Activated CD4-positive, alpha-beta memory T cell treated with anti-CD3 and anti-CD28 coated beads for 36 hours (primary cell): ENCODE measurements at regions of chr22 and their contacts with region 1.

Region 1: GRCh38 chr22:31585161-31585859 is 76.7 kb downstream of the PISD start:
- DNase-seq: peak; percentile 49
- H3K4me3 Mint-ChIP-seq: no peak overlapping the region
- H3K27ac Mint-ChIP-seq: peak overlapping the region; percentile 6
- H3K4me1 Mint-ChIP-seq: peaks cover 55% of the 10 kb centered on the region
- H3K27me3 Mint-ChIP-seq: no peaks in the 10 kb centered on the region

Region 2: DNA sequence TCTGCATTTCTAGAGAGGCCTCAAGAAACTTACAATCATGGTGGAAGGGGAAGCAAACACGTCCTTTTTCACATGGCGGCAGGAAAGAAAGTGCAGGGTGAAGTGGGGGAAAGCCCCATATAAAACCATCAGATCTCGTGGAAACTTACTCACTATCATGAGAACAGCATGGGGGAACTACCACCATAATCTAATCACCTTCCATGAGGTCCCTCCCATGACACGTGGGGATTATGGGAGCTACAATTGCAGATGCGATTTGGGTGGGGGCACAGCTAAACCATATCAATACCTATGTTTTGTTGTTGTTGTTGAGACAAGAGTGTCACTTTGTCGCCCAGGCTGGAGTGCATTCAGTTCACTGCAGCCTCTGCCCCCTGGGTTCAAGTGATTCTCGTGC is 59.0 kb before region 1 on chr22:
- CTCF ChIA-PET with region 1: no interaction called
- POLR2A ChIA-PET with region 1: no interaction called
- intact Hi-C with region 1: loop called (anchors 1 kb)
- DNase-seq: peak; percentile 76
- H3K4me3 Mint-ChIP-seq: peak overlapping the region; percentile 45
- H3K27ac Mint-ChIP-seq: peak overlapping the region; percentile 96
- H3K4me1 Mint-ChIP-seq: peaks cover 64% of the 10 kb centered on the region
- H3K27me3 Mint-ChIP-seq: no peaks in the 10 kb centered on the region

Region 3: GRCh38 chr22:31776231-31776630 is 190.9 kb after region 1 on chr22:
- CTCF ChIA-PET with region 1: no interaction called
- POLR2A ChIA-PET with region 1: no interaction called
- intact Hi-C with region 1: no loop called
- DNase-seq: no peak
- H3K4me3 Mint-ChIP-seq: no peak overlapping the region
- H3K27ac Mint-ChIP-seq: no peak overlapping the region
- H3K4me1 Mint-ChIP-seq: no peaks in the 10 kb centered on the region
- H3K27me3 Mint-ChIP-seq: no peaks in the 10 kb centered on the region

Region 4: GRCh38 chr22:32036896-32037660 is 451.8 kb after region 1 on chr22:
- CTCF ChIA-PET with region 1: no interaction called
- POLR2A ChIA-PET with region 1: no interaction called
- intact Hi-C with region 1: no loop called
- DNase-seq: no peak
- H3K4me3 Mint-ChIP-seq: no peak overlapping the region
- H3K27ac Mint-ChIP-seq: no peak overlapping the region
- H3K4me1 Mint-ChIP-seq: no peaks in the 10 kb centered on the region
- H3K27me3 Mint-ChIP-seq: peaks cover 30% of the 10 kb centered on the region